Common myeloid progenitor, CD34-positive (primary cell): ENCODE measurements at regions of chr2 and their contacts with region 1.

Region 1: GRCh38 chr2:26144953-26145680 is 27.8 kb upstream of the GAREM2 start:
- DNase-seq: peak; percentile 70 to 84 (median 80)
- H3K4me3 ChIP-seq: no peak overlapping the region
- H3K27ac ChIP-seq: no peak overlapping the region
- H3K4me1 ChIP-seq: peaks cover 0 to 12% (median 5%) of the 10 kb centered on the region in 4 experiments
- H3K27me3 ChIP-seq: peaks cover 0 to 4% (median 2%) of the 10 kb centered on the region in 5 experiments

Region 2: GRCh38 chr2:25951071-25951547 is 194.0 kb before region 1 on chr2:
- CTCF ChIA-PET with region 1: interaction called, 43 read pairs
- POLR2A ChIA-PET with region 1: interaction called, 3 read pairs
- DNase-seq: peak; percentile 81 to 90 (median 84)
- H3K4me3 ChIP-seq: no peak overlapping the region
- H3K27ac ChIP-seq: no peak overlapping the region
- H3K4me1 ChIP-seq: no peaks in the 10 kb centered on the region
- H3K27me3 ChIP-seq: no peaks in the 10 kb centered on the region

Region 3: GRCh38 chr2:25991965-25992364 is 153.2 kb before region 1 on chr2:
- CTCF ChIA-PET with region 1: interaction called, 59 read pairs
- POLR2A ChIA-PET with region 1: no interaction called
- DNase-seq: no peak
- H3K4me3 ChIP-seq: peak overlapping the region in 2 of 7 experiments; percentile 37 to 65
- H3K27ac ChIP-seq: no peak overlapping the region
- H3K4me1 ChIP-seq: peaks cover 6 to 9% (median 8%) of the 10 kb centered on the region in 4 experiments
- H3K27me3 ChIP-seq: no peaks in the 10 kb centered on the region

Region 4: DNA sequence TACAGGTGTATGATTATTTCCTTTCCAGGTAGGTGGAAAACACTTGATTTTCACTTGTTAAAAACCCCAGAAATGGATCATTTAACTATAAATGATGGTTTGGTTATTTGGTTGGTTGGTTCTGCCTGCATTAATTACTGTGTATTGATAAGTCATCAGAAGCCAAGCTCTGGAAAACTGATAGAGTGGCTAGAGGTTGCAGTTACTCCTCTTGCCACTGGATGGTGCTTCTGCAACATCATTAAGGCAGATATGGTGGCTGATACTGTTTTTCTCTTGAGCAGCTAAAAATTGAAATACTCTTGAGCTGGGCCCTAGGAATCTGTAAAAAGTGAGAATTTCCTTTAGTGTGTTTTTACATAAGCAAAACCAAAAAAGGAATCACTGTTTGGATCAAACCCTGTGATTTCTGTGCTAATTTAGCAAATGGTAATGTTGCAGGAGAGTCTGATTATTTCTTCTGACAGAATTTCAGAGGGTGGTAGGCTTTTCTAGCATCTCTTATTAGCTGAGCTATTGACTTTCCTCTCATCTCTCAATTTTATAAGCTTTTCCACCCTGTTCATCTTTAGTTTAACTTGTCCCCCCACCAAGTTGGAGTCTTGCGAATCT is 57.0 kb before region 1 on chr2:
- CTCF ChIA-PET with region 1: interaction called, 14 read pairs
- POLR2A ChIA-PET with region 1: no interaction called
- DNase-seq: peak; percentile 44 to 55 (median 53)
- H3K4me3 ChIP-seq: no peak overlapping the region
- H3K27ac ChIP-seq: no peak overlapping the region
- H3K4me1 ChIP-seq: peaks cover 0 to 10% (median 8%) of the 10 kb centered on the region in 4 experiments
- H3K27me3 ChIP-seq: no peaks in the 10 kb centered on the region